GM10248 (cell line): ENCODE measurements at regions of chr1 and their contacts with region 1.

Region 1: GRCh38 chr1:39680751-39681150 is 8.8 kb upstream of the NT5C1A start:
- DNase-seq: no peak
- CTCF ChIP-seq: no peak

Region 2: GRCh38 chr1:39625462-39626273 is 55.1 kb before region 1 on chr1:
- CTCF ChIA-PET with region 1: no interaction called
- POLR2A ChIA-PET with region 1: no interaction called
- DNase-seq: no peak
- CTCF ChIP-seq: no peak

Region 3: DNA sequence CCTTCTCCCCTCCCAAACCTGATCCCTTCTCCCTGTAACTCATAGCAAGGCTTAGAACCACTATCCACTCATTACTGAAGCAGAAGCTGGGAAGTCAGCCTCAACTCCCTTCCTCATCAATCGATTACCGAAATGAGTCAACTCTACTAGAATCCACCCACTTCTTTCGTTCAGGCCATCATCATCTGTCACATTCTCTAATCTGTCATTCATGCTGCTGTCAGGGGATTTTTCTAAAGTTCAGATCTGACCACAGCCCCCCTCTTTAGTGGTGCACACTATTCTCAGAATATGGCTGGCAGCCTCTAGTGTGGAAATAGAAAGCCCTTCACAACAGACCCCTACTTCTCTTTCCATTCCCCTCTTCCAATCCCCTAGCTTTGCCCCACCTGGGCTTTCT is 14.0 kb before region 1 on chr1:
- CTCF ChIA-PET with region 1: interaction called, 27 read pairs
- POLR2A ChIA-PET with region 1: no interaction called
- DNase-seq: peak; percentile 85
- CTCF ChIP-seq: no peak

Region 4: GRCh38 chr1:39691262-39692151 is 10.8 kb after region 1 on chr1 and contains the start of gene HPCAL4:
- CTCF ChIA-PET with region 1: interaction called, 15 read pairs
- POLR2A ChIA-PET with region 1: no interaction called
- DNase-seq: peak; percentile 85
- CTCF ChIP-seq: no peak